ENCODE measurements at regions of chr17 and their contacts with region 1.

Region 1: GRCh38 chr17:50956750-50957523 is 90.8 kb upstream of the TOB1 start:
- DNase-seq: peak; percentile 80 to 86
- ATAC-seq: peak; percentile 78
- H3K4me3 ChIP-seq: no peak overlapping the region
- H3K27ac ChIP-seq: no peak overlapping the region
- H3K4me1 ChIP-seq: no peaks in the 10 kb centered on the region
- H3K27me3 ChIP-seq: no peaks in the 10 kb centered on the region

Region 2: GRCh38 chr17:50783193-50783660 is 173.7 kb before region 1 on chr17:
- intact Hi-C with region 1: loop called (anchors 5 kb)
- DNase-seq: peak; percentile 85 to 95
- ATAC-seq: peak; percentile 90
- H3K4me3 ChIP-seq: no peak overlapping the region
- H3K27ac ChIP-seq: no peak overlapping the region
- H3K4me1 ChIP-seq: no peaks in the 10 kb centered on the region
- H3K27me3 ChIP-seq: no peaks in the 10 kb centered on the region

Region 3: GRCh38 chr17:50853015-50853615 is 103.8 kb before region 1 on chr17:
- intact Hi-C with region 1: loop called (anchors 5 kb)
- DNase-seq: no peak
- ATAC-seq: no peak
- H3K4me3 ChIP-seq: no peak overlapping the region
- H3K27ac ChIP-seq: no peak overlapping the region
- H3K4me1 ChIP-seq: peaks cover 0 to 2% of the 10 kb centered on the region in 2 donors
- H3K27me3 ChIP-seq: no peaks in the 10 kb centered on the region